GM12878 (cell line): ENCODE measurements at regions of chr5 and their contacts with region 1.

Region 1: GRCh38 chr5:141524604-141525597 is 36.0 kb downstream of the PCDHGC5 start:
- DNase-seq: no peak
- ATAC-seq: peak; percentile 91
- H3K4me3 ChIP-seq: no peak overlapping the region
- H3K27ac ChIP-seq: peak overlapping the region; percentile 9; the same call in 1 of the 2 replicates
- H3K4me1 ChIP-seq: peaks cover 26% of the 10 kb centered on the region
- H3K27me3 ChIP-seq: no peaks in the 10 kb centered on the region
- CTCF ChIP-seq: peak; percentile 98 to 100 (median 99)
- EP300 ChIP-seq: 0 out of 4 replicates have a peak, but pooled peaks of 1 of the 2 experiments have one; percentile 38
- POLR2A ChIP-seq: 0 out of 2 replicates have a peak, but pooled peaks have one; percentile 34
- RAD21 ChIP-seq: peak; percentile 73

Region 2: GRCh38 chr5:141412854-141413539 is 111.9 kb before region 1 on chr5 and contains the start of gene PCDHGA10:
- CTCF ChIA-PET with region 1: interaction called, 48 read pairs
- POLR2A ChIA-PET with region 1: no interaction called
- RAD21 ChIA-PET with region 1: interaction called, 11 read pairs
- SMC1A ChIA-PET with region 1: interaction called, 16 read pairs
- in situ Hi-C with region 1: no loop called
- intact Hi-C with region 1: no loop called
- DNase-seq: peak; percentile 27
- ATAC-seq: peak; percentile 89
- H3K4me3 ChIP-seq: peak within 1 kb of the TSS; percentile 76
- H3K27ac ChIP-seq: no peak within 1 kb of the TSS
- H3K4me1 ChIP-seq: no peaks in the 10 kb centered on the region; the same call in 1 of the 2 replicates
- H3K27me3 ChIP-seq: peaks cover 0 to 1% of the 10 kb centered on the region in 2 experiments; a peak in 1 of 4 replicates
- CTCF ChIP-seq: peak; percentile 81 to 86 (median 83)
- EP300 ChIP-seq: no peak
- POLR2A ChIP-seq: no peak
- RAD21 ChIP-seq: peak; percentile 86
- polyA plus RNA-seq, gene PCDHGA10: 0.58 to 0.68 TPM

Region 3: DNA sequence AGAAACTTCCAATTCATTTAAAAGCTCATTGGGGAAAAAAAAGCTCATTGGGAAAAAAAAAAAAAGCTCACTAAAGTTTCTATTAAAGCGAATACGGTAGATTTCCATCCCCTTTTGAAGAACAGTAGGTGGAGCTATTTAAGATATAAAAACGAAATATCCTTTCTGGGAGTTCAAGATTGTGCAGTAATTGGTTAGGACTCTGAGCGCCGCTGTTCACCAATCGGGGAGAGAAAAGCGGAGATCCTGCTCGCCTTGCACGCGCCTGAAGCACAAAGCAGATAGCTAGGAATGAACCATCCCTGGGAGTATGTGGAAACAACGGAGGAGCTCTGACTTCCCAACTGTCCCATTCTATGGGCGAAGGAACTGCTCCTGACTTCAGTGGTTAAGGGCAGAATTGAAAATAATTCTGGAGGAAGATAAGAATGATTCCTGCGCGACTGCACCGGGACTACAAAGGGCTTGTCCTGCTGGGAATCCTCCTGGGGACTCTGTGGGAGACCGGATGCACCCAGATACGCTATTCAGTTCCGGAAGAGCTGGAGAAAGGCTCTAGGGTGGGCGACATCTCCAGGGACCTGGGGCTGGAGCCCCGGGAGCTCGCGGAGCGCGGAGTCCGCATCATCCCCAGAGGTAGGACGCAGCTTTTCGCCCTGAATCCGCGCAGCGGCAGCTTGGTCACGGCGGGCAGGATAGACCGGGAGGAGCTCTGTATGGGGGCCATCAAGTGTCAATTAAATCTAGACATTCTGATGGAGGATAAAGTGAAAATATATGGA is 94.4 kb before region 1 on chr5 and contains the start of gene PCDHGA12:
- CTCF ChIA-PET with region 1: interaction called, 38 read pairs
- POLR2A ChIA-PET with region 1: no interaction called
- RAD21 ChIA-PET with region 1: interaction called, 10 read pairs
- SMC1A ChIA-PET with region 1: interaction called, 17 read pairs
- in situ Hi-C with region 1: no loop called
- intact Hi-C with region 1: loop called (anchors 1 kb)
- DNase-seq: peak; percentile 37
- ATAC-seq: peak; percentile 96
- H3K4me3 ChIP-seq: peak within 1 kb of the TSS; percentile 22; the same call in 1 of the 2 replicates
- H3K27ac ChIP-seq: no peak within 1 kb of the TSS
- H3K4me1 ChIP-seq: no peaks in the 10 kb centered on the region; the same call in 1 of the 2 replicates
- H3K27me3 ChIP-seq: no peaks in the 10 kb centered on the region
- CTCF ChIP-seq: peak; percentile 62 to 82 (median 68)
- EP300 ChIP-seq: no peak
- POLR2A ChIP-seq: no peak
- RAD21 ChIP-seq: peak; percentile 56
- polyA plus RNA-seq, gene PCDHGA12: not detected

Region 4: DNA sequence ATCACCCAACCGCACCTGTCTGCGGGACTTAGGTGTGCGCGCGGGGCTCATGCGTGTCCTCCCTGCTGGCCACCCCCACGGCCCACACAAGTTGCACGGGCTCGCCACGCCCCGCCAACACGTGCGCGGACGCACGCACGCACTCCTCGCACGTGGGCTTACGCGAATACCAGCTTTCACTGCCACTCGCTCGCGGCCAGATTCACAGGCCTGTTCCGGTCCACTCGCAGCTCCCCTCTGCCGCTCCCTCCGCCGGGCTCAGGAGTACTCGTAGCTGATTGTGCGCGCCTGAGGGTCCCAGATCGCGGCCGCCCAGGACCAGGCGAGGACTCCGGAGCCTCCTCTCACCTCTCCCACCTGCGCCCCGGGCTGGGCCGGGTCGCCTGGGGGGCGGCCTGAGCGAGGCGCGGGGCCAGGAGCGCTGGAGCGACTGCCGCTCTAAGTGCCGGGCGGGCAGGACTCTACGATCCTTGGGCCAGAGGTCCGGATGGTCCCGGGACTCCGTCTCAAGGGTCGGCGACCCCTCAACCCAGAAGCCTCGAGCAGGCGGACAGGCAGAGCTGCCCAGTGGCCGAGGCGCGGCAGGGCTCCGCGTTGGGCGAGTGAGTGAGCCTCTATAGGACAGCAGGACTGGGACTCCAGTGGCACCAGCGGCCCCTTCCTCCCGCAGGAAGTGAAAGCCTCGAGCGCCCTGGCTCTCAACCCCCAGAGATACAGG is 32.6 kb before region 1 on chr5:
- CTCF ChIA-PET with region 1: interaction called, 15 read pairs
- POLR2A ChIA-PET with region 1: no interaction called
- RAD21 ChIA-PET with region 1: interaction called, 3 read pairs
- SMC1A ChIA-PET with region 1: interaction called, 4 read pairs
- in situ Hi-C with region 1: no loop called
- intact Hi-C with region 1: no loop called
- DNase-seq: no peak
- ATAC-seq: peak; percentile 78
- H3K4me3 ChIP-seq: peak overlapping the region; percentile 65
- H3K27ac ChIP-seq: no peak overlapping the region
- H3K4me1 ChIP-seq: peaks cover 24% of the 10 kb centered on the region
- H3K27me3 ChIP-seq: no peaks in the 10 kb centered on the region; a peak in 1 of 4 replicates
- CTCF ChIP-seq: no peak
- EP300 ChIP-seq: no peak
- POLR2A ChIP-seq: peak; percentile 76
- RAD21 ChIP-seq: no peak